ENCODE measurements at regions of chr7 and their contacts with region 1.

Region 1: DNA sequence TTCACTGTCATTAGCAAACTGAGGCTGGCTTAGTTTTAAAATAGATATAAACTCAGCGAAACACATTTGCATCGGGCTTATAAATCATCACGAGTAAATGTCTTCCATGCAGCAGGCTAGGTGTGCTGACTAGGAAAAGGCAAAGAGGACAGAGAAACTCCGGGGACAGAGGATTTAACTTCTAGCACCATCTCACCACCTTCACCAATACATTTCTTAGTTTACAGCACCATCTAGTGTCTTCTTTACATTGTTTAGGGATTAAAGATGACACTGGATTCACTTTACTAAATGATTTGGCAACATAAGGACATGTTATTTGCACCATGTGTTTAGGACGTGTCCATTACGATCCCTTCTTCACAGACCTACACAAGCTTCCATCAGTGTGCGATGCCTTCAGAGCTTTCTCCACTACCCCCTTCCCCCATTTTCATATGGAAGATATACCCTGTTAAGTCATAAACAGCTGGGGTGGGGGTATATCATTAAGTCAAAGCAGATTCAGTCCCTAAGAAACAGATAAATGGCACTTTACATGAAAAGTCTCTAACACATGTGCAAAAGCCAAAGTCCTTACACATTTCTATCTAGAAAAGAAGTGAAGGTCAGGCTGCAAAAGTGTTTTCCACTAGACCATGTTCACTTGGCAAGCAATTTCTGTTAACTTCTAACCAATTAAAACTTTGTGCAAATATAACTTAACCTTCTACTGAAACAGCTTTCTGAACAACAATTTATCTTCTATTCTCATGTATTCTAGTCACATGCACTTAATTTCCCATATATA is 103.3 kb downstream of the GRB10 start:
- DNase-seq: peak; percentile 54 to 73 (median 70)
- H3K4me3 ChIP-seq: no peak overlapping the region
- H3K27ac ChIP-seq: no peak overlapping the region
- H3K4me1 ChIP-seq: peaks cover 2 to 22% (median 18%) of the 10 kb centered on the region in 4 experiments
- H3K27me3 ChIP-seq: no peaks in the 10 kb centered on the region

Region 2: GRCh38 chr7:50560865-50561351 is 118.5 kb before region 1 on chr7:
- CTCF ChIA-PET with region 1: no interaction called
- POLR2A ChIA-PET with region 1: no interaction called
- DNase-seq: no peak
- H3K4me3 ChIP-seq: no peak overlapping the region
- H3K27ac ChIP-seq: no peak overlapping the region
- H3K4me1 ChIP-seq: peaks cover 0 to 21% (median 2%) of the 10 kb centered on the region in 4 experiments
- H3K27me3 ChIP-seq: peaks cover 0 to 6% (median 1%) of the 10 kb centered on the region in 5 experiments

Region 3: DNA sequence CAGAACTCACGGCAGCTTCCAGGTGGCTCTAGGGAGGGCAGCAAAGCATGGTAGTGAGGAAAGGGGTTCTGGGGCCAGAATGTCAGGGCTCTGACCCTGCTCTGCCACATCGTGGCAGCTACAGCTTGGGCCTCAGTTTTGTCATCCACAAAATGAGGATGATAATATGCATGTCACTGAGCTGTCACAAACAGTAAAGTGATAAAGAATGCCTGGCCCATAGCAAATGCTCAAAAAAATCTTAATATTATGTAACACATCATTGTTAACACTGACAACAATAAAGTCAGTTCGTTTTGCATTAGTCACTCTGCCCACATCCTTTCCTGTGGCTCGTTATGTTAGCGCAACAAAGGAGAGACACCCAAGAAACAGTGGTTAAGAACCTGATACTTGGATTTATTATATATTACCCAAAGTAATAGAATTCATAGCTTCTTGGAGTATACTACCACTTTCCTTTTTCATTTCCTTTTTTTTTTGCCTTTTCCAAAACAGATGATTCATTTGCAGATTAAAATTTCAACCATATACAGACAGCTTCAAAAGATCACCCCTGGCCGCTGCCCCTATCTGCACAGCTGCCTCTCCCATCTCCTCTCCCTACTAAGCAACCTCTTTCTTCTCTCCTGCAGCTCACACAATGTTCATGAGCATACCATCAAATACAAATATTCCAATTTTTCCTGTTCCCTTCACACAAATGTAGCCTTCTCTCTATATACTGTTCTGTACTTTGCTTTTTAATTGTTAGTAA is 68.7 kb before region 1 on chr7:
- CTCF ChIA-PET with region 1: interaction called, 19 read pairs
- POLR2A ChIA-PET with region 1: no interaction called
- DNase-seq: peak; percentile 71 to 96 (median 93)
- H3K4me3 ChIP-seq: no peak overlapping the region
- H3K27ac ChIP-seq: peak overlapping the region in 1 of 2 experiments; percentile 29
- H3K4me1 ChIP-seq: peaks cover 5 to 30% (median 24%) of the 10 kb centered on the region in 4 experiments
- H3K27me3 ChIP-seq: no peaks in the 10 kb centered on the region

Region 4: GRCh38 chr7:50621973-50622490 is 57.4 kb before region 1 on chr7:
- CTCF ChIA-PET with region 1: interaction called, 13 read pairs
- POLR2A ChIA-PET with region 1: no interaction called
- DNase-seq: no peak
- H3K4me3 ChIP-seq: no peak overlapping the region
- H3K27ac ChIP-seq: no peak overlapping the region
- H3K4me1 ChIP-seq: no peaks in the 10 kb centered on the region
- H3K27me3 ChIP-seq: no peaks in the 10 kb centered on the region

Region 5: DNA sequence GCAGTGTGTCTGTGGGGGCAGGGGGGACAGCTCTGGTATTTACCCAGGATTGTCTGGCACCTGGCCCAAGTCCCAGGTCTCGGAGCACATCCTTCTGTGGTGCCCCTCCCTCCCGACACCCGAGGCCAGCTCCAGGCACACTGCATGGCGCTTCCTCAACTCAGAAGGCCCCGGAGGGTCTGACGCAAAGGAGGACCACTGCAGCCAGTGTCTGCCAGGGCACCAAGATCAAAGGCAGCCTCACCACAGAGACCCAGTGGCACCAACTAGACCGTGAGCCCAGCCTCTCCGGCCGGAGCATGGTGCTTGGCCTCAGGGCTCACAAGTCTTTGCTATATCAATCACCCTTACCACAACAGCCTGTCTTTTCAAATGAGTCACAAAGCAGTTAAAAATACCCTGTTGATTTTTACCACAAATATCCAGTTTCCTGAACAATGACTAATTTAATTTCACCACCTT is 14.9 kb before region 1 on chr7:
- CTCF ChIA-PET with region 1: interaction called, 77 read pairs
- POLR2A ChIA-PET with region 1: no interaction called
- DNase-seq: peak; percentile 53 to 95 (median 90)
- H3K4me3 ChIP-seq: peak overlapping the region in 2 of 7 experiments; percentile 26 to 32
- H3K27ac ChIP-seq: peak overlapping the region in 1 of 2 experiments; percentile 68
- H3K4me1 ChIP-seq: peaks cover 12 to 70% (median 66%) of the 10 kb centered on the region in 4 experiments
- H3K27me3 ChIP-seq: no peaks in the 10 kb centered on the region

Region 6: DNA sequence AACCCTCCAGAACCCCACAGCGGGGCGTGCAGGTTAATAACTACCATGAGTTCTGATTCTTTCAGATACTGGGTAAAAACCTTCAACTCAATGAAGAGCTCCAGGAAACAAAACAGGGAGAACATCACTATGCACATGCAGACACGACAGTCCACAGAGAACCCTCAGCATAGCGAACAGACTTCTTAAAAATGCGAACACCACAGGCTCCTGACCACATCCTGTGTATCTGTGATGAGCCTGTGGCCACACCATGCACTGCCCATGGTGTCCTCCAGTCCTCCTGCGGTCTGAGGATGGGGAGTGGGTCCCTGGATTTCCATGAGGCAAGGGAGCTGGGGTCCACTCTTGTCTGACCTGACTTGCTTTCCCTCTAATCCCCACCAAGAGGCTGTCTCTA is 530.0 kb after region 1 on chr7:
- CTCF ChIA-PET with region 1: no interaction called
- POLR2A ChIA-PET with region 1: no interaction called
- DNase-seq: no peak
- H3K4me3 ChIP-seq: no peak overlapping the region
- H3K27ac ChIP-seq: no peak overlapping the region
- H3K4me1 ChIP-seq: no peaks in the 10 kb centered on the region
- H3K27me3 ChIP-seq: no peaks in the 10 kb centered on the region